Calu3 (cell line): ENCODE measurements at regions of chr2 and their contacts with region 1.

Region 1: GRCh38 chr2:181810823-181811695 is 80.5 kb upstream of the ITPRID2 start:
- DNase-seq: peak; percentile 67
- H3K4me3 Mint-ChIP-seq: peak overlapping the region; percentile 38
- H3K27ac Mint-ChIP-seq: peak overlapping the region; percentile 95
- H3K4me1 Mint-ChIP-seq: peaks cover 78% of the 10 kb centered on the region
- H3K27me3 Mint-ChIP-seq: no peaks in the 10 kb centered on the region
- CTCF ChIP-seq: no peak

Region 2: GRCh38 chr2:181836583-181836982 is 25.5 kb after region 1 on chr2:
- CTCF ChIA-PET with region 1: interaction called, 3 read pairs
- intact Hi-C with region 1: loop called (anchors 2 kb)
- DNase-seq: no peak
- H3K4me3 Mint-ChIP-seq: peak overlapping the region; percentile 25
- H3K27ac Mint-ChIP-seq: peak overlapping the region; percentile 80
- H3K4me1 Mint-ChIP-seq: peaks cover 54% of the 10 kb centered on the region
- H3K27me3 Mint-ChIP-seq: no peaks in the 10 kb centered on the region
- CTCF ChIP-seq: no peak

Region 3: GRCh38 chr2:181904022-181904632 is 93.1 kb after region 1 on chr2:
- CTCF ChIA-PET with region 1: no interaction called
- intact Hi-C with region 1: loop called (anchors 1 kb)
- DNase-seq: no peak
- H3K4me3 Mint-ChIP-seq: peak overlapping the region; percentile 68
- H3K27ac Mint-ChIP-seq: peak overlapping the region; percentile 95
- H3K4me1 Mint-ChIP-seq: peaks cover 74% of the 10 kb centered on the region
- H3K27me3 Mint-ChIP-seq: no peaks in the 10 kb centered on the region
- CTCF ChIP-seq: peak; percentile 59

Region 4: GRCh38 chr2:181959508-181959907 is 148.4 kb after region 1 on chr2:
- CTCF ChIA-PET with region 1: no interaction called
- intact Hi-C with region 1: no loop called
- DNase-seq: no peak
- H3K4me3 Mint-ChIP-seq: no peak overlapping the region
- H3K27ac Mint-ChIP-seq: no peak overlapping the region
- H3K4me1 Mint-ChIP-seq: peaks cover 32% of the 10 kb centered on the region
- H3K27me3 Mint-ChIP-seq: no peaks in the 10 kb centered on the region
- CTCF ChIP-seq: no peak

Region 5: DNA sequence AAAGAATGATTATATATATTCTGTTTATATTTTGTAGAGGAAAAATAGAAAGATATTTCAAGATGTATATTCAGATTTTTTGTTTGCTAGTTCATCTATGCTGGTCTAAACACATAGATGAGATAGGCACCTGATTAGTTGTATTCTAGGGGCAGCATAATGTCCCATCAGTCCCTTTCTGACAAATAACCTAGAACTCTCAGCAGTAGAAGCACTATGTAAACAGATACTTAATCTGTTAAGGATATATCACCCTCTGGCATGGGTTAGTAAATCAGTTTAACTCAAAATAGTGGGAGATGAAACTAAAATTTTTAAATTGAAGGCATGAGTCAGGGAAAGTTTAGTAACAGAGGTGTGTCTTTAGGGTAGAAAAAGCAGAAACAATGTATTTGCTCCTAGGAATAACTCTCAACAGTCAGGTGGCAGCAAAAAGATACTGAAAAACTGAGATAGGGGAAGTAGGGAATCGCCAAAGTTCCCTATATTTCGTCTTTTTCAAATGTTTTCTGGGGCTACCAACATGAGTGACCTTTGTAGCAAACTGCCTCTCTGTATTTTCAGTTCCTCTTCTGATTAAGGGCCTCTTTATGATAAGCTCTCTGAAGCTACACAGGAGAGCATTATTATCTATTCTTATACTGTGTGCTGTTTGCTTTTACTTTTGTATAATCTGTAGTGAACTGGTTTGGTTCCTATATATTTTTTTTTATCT is 180.3 kb after region 1 on chr2:
- CTCF ChIA-PET with region 1: no interaction called
- intact Hi-C with region 1: no loop called
- DNase-seq: no peak
- H3K4me3 Mint-ChIP-seq: no peak overlapping the region
- H3K27ac Mint-ChIP-seq: no peak overlapping the region
- H3K4me1 Mint-ChIP-seq: no peaks in the 10 kb centered on the region
- H3K27me3 Mint-ChIP-seq: no peaks in the 10 kb centered on the region
- CTCF ChIP-seq: no peak